Astrocyte of the cerebellum (primary cell): ENCODE measurements at regions of chr11 and their contacts with region 1.

Region 1: GRCh38 chr11:63179432-63180041 is 35.5 kb upstream of the SLC22A24 start:
- DNase-seq: no peak
- H3K4me3 ChIP-seq: no peak overlapping the region
- CTCF ChIP-seq: no peak

Region 2: DNA sequence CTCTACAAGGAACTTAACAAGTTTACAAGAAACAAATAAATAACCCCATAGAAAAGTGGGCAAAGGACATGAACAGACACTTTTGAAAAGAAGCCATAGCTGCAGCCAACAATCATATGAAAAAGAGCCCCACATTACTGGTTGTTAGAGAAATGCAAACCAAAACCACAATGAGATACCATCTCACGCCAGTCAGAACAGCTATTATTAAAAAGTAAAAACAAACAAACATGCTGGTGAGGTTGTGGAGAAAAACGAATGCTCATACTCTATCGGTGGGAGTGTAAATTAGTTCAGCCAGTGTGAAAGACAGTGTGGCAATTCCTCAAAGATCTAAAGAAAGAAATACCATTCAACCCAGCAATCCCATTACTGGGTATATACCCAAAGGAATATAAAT is 69.5 kb after region 1 on chr11:
- in situ Hi-C with region 1: loop called (anchors 5 kb)
- DNase-seq: no peak
- H3K4me3 ChIP-seq: no peak overlapping the region
- CTCF ChIP-seq: no peak

Region 3: DNA sequence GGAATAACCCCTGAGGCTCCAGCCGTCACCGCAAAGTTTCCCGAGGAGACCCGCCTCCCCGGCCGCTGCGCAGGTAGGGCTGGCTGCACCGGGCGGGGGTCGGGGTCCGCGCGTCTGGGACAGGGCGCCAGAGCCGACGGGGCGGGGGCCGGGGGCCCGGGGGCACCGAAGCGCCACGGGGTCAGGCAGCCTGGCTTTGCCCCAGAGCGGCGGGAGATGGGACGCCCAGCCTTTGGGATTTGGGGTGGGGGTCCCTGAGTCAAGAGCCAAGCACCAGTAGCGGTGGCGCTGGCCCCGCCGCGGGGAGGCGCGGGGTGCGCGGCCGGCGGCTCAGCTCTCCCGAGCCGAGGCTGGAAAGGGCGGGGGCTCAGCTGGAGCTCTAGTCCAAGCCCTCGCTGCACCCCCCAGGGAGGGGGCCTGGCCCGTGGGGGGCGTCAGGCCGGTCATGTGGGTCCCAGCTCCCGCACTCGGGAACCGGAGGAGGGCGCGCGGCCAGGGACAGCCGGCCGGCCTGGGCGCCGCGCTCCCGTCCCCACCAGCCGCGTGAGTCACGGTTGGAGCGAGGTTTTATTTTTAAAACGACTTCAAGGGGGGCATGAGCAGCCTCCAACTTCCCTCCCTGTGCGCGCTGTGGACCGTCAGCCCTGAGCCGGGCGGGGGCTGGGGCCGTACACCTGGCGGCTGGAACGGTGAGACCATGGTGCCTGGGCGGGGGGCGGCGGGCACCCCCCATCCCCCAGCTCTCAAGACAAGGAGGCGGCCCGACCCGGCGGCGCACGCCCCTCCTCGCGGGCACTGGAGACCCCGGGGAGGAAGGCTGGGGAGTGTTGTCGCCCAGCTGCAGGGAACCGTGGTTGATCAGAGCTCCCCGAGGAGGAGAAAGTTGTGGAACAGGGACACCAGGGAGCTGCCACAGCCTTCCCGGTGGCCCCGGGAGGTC is 856.8 kb after region 1 on chr11:
- in situ Hi-C with region 1: no loop called
- DNase-seq: no peak
- H3K4me3 ChIP-seq: peak overlapping the region; percentile 32
- CTCF ChIP-seq: no peak